ENCODE measurements at regions of chr6 and their contacts with region 1.

Region 1: DNA sequence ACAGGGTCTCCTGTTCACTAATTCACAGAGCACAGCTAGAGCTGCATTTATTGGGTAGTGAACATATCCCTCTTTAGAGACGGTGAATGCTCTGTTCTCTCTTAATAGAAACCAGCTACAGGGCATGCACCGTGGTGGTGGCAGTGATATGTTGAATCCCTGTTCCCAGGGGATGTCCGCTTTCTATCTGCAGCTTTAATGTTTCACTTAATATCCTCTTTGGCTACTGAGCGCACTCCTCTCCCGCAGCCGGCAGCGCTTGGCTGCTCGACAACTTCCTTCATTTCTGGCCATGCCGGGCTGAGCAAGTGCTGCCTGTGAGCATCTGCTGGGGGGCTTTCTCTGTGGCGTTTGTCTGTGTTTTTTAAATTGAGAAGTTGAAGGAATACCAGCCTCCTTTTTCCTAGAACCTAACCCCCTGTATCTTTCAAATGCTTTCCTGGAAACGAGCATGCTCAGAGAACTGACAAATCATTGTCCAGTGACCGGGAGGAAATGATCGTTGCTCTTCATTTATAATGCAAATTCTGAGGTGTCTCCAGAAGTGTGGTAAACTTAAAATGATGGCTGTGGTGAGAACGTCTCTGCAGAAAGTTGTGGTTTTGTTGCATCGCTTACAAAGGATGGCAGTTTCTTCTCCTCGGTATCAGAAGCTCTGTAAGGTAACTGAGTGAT is 297.9 kb downstream of the UTRN start:
- DNase-seq: peak; percentile 66
- ATAC-seq: peak; percentile 80
- H3K4me3 Mint-ChIP-seq: peak overlapping the region; percentile 78
- H3K27ac Mint-ChIP-seq: peak overlapping the region; percentile 93
- H3K4me1 Mint-ChIP-seq: peaks cover 46% of the 10 kb centered on the region
- H3K27me3 Mint-ChIP-seq: no peaks in the 10 kb centered on the region
- CTCF ChIP-seq: no peak

Region 2: DNA sequence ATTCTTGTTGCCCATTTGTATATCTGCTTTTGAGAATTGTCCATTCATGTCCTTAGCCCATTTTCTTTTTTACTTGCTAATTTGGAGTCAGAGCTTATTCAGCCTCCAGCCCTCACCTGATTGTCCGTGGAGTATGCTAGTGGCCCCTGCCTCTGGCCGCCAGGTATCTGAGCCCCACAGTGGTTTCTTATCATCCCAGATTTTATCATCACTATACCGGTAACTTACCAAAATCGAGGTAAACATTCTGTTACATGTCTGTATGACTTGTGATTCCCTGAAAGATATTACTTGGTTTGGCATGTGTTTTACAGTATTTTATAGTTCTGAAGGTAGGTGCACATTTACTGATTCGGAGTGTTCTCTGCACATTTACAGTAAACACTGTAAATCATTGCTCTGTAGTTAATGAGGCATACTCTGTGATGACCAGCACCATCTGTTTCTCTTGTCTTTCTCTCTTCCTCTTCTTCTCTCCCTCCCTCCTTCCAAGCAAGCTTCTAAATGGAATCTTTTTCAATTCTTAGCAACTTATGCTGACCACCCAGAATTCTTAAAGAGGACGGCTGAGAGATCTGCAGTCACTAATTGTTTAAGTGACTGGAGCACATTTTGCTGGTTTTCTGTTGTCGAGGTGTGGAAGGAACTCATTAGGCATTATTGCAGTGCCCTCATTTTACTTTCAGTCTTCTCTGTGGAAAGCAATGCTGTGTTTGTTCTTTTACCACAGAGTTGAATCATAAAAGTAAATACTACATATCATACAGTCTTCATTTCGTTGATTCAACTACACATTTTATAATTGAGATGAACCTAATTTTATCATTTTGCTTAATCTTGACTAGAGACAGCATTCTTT is 171.5 kb before region 1 on chr6:
- CTCF ChIA-PET with region 1: no interaction called
- POLR2A ChIA-PET with region 1: no interaction called
- intact Hi-C with region 1: no loop called
- DNase-seq: peak; percentile 6
- ATAC-seq: peak; percentile 84
- H3K4me3 Mint-ChIP-seq: peak overlapping the region; percentile 63
- H3K27ac Mint-ChIP-seq: peak overlapping the region; percentile 86
- H3K4me1 Mint-ChIP-seq: peaks cover 35% of the 10 kb centered on the region
- H3K27me3 Mint-ChIP-seq: no peaks in the 10 kb centered on the region
- CTCF ChIP-seq: no peak

Region 3: DNA sequence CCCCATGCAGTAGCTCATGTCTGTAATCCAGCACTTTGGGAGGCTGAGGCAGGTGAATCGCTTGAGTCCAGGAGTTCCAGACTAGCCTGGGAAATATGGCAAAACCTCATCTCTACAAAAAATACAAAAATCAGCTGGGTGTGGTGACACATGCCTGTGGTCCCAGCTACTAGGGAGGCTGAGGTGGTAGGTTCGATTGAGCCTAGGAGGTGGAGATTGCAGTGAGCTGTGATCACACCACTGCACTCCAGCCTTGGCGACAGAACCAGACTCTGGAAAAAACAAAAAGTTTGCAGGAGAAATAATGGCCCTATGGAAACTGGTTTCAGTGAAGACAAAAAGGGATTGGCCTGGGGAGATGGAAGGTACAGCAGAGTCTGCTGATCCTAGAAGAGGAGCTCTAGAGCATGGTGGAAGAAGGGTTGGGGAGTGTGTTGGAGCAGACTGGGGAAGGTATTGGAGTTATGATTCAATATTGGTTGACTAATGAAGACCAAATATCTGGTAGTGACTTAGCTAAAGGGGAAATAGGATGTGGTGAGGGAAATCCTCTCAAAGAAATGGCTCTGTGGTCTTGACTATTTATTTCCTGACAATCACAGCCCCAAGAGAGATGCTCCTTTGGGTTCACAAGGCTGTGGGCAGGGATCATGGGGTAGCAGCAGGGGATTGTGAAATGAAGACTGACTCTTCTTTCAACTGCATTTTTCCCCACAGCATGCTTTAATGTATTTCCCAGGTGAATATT is 16.0 kb before region 1 on chr6:
- CTCF ChIA-PET with region 1: interaction called, 15 read pairs
- POLR2A ChIA-PET with region 1: no interaction called
- intact Hi-C with region 1: no loop called
- DNase-seq: peak; percentile 21
- ATAC-seq: peak; percentile 56
- H3K4me3 Mint-ChIP-seq: no peak overlapping the region
- H3K27ac Mint-ChIP-seq: no peak overlapping the region
- H3K4me1 Mint-ChIP-seq: peaks cover 2% of the 10 kb centered on the region
- H3K27me3 Mint-ChIP-seq: no peaks in the 10 kb centered on the region
- CTCF ChIP-seq: no peak

Region 4: DNA sequence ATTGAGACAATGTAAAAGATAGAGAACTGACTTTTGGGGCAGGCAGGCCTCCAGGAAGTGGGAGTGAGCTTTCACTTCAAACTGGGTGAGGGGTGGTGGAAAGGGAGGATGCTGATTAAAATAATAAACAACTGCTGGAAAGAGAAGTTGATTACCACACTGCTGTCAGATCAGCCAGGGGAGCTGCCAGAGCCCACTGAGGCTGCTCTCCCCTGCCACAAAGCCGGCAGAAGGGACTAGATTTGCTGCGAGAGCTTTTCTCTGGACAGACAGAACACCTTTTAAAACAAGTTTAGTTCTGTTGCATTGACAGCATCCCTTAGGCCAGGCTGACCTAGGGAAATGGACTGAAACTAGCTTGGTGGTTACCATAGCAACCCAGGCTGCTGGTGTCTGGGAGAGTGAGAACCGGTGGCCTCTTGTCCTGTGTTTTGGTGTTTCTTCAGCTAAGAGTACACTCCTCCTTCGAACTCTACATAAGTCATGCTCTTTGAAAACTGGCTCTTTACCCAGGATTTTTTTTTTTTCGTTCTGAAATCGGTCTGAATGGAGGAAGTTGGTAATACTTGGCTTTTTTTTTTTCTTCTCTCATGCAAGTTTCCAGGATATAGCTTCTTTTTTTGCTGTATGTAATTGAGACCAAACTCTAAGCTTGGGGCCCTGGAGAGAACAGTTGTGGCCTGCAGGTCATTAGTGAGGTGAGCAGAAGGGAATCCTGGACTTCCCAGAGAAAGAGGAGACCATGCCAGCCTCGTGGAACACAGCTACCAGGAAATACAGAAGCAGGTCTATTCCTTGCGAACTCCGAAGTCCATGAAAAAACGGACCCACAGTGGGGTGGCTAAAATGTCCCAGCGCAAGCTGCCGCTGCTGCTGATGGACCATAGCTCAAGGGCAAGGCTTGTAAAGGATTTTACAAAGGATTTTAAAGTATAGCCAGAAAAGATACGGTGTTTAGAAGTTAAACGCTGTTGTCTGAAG is 76.4 kb after region 1 on chr6:
- CTCF ChIA-PET with region 1: interaction called, 34 read pairs
- POLR2A ChIA-PET with region 1: no interaction called
- intact Hi-C with region 1: no loop called
- DNase-seq: peak; percentile 20
- ATAC-seq: peak; percentile 50
- H3K4me3 Mint-ChIP-seq: peak overlapping the region; percentile 33
- H3K27ac Mint-ChIP-seq: peak overlapping the region; percentile 82
- H3K4me1 Mint-ChIP-seq: peaks cover 61% of the 10 kb centered on the region
- H3K27me3 Mint-ChIP-seq: no peaks in the 10 kb centered on the region
- CTCF ChIP-seq: no peak

Region 5: GRCh38 chr6:144811140-144811539 is 228.1 kb after region 1 on chr6:
- CTCF ChIA-PET with region 1: no interaction called
- POLR2A ChIA-PET with region 1: no interaction called
- intact Hi-C with region 1: loop called (anchors 10 kb)
- DNase-seq: no peak
- ATAC-seq: no peak
- H3K4me3 Mint-ChIP-seq: no peak overlapping the region
- H3K27ac Mint-ChIP-seq: no peak overlapping the region
- H3K4me1 Mint-ChIP-seq: peaks cover 1% of the 10 kb centered on the region
- H3K27me3 Mint-ChIP-seq: no peaks in the 10 kb centered on the region
- CTCF ChIP-seq: no peak

Region 6: GRCh38 chr6:144912474-144912873 is 329.4 kb after region 1 on chr6:
- CTCF ChIA-PET with region 1: no interaction called
- POLR2A ChIA-PET with region 1: no interaction called
- intact Hi-C with region 1: no loop called
- DNase-seq: no peak
- ATAC-seq: no peak
- H3K4me3 Mint-ChIP-seq: no peak overlapping the region
- H3K27ac Mint-ChIP-seq: no peak overlapping the region
- H3K4me1 Mint-ChIP-seq: peaks cover 4% of the 10 kb centered on the region
- H3K27me3 Mint-ChIP-seq: peaks cover 3% of the 10 kb centered on the region
- CTCF ChIP-seq: no peak

Region 7: DNA sequence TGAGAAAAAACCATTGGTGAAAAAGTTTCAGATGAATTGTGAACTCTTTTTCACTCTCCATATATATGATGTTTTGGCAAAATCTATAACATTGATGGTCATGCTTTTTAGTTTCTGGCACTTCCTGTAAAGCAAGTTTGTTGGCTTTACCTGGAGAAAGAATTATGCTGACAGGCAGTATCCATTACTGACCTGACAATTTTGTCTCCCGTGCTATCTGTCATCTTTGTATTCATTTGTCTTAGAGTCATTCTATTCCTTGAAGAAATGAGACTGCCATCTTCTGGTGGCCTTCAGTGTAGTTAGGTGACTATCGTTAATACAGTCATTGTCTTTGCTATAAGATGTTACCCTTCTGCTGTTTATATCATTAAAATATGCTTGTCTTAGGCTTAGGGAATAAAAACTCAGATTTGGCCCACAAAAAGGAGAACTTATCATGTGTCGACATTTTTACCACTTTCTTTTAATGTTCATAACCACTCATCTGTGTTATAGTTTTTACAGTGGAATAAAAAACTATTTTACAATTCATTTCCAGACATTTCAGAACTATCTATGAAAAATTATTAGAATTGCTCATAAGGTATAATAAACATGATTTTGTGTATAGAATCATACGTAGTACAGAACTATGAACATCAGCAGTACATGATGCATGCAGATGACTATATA is 445.2 kb after region 1 on chr6:
- CTCF ChIA-PET with region 1: interaction called, 4 read pairs
- POLR2A ChIA-PET with region 1: no interaction called
- intact Hi-C with region 1: loop called (anchors 5 kb)
- DNase-seq: peak; percentile 33
- ATAC-seq: peak; percentile 74
- H3K4me3 Mint-ChIP-seq: no peak overlapping the region
- H3K27ac Mint-ChIP-seq: no peak overlapping the region
- H3K4me1 Mint-ChIP-seq: no peaks in the 10 kb centered on the region
- H3K27me3 Mint-ChIP-seq: peaks cover 18% of the 10 kb centered on the region
- CTCF ChIP-seq: peak; percentile 40

Measured in activated CD8-positive, alpha-beta T cell treated with anti-CD3 and anti-CD28 coated beads for 36 hours (primary cell).